ENCODE measurements at regions of chr3 and their contacts with region 1.

Region 1: GRCh38 chr3:51501833-51502561 is 2.2 kb upstream of the DCAF1 start:
- DNase-seq: peak; percentile 66
- CTCF ChIP-seq: peak; percentile 99

Region 2: DNA sequence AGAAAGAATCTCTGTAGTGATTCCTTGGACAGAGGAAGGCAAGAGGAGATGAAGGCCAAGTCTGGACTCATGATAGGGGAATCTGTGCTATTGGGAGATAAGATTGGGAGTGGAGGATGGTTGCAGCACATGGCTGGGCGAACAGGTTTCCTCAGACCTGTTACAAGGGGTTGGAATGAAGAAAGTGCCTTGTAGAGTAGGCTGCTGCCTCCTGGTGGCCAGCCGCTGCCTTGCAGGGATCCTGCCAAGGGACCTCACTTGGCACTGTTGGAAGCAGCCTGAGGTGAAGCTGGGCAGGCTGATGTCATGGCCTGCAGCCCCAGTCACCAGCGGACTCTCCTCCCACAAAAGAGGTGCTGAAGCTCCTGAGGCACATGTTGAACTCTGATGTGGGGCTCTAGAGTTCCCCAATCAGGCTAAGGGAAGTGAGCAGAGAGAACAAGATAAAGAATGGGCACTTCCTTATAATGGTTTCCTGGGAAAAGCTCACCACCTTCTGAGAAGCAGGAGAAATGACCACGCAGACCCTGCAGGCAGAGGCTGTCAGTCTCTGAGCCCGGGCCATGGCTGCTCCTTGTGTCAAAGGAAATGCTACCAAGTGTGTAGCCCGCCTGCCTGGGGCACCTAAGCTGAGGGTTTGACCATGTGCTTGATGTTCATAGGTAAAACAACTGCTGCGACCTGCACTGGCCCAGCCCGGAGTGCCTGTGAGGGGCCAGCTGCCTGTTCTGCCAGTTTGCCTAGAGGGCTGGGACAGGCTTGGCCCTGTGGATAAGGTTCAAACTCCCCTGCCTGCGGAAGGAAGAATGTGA is 167.4 kb after region 1 on chr3:
- in situ Hi-C with region 1: loop called (anchors 10 kb)
- DNase-seq: peak; percentile 73
- CTCF ChIP-seq: peak; percentile 99

Region 3: DNA sequence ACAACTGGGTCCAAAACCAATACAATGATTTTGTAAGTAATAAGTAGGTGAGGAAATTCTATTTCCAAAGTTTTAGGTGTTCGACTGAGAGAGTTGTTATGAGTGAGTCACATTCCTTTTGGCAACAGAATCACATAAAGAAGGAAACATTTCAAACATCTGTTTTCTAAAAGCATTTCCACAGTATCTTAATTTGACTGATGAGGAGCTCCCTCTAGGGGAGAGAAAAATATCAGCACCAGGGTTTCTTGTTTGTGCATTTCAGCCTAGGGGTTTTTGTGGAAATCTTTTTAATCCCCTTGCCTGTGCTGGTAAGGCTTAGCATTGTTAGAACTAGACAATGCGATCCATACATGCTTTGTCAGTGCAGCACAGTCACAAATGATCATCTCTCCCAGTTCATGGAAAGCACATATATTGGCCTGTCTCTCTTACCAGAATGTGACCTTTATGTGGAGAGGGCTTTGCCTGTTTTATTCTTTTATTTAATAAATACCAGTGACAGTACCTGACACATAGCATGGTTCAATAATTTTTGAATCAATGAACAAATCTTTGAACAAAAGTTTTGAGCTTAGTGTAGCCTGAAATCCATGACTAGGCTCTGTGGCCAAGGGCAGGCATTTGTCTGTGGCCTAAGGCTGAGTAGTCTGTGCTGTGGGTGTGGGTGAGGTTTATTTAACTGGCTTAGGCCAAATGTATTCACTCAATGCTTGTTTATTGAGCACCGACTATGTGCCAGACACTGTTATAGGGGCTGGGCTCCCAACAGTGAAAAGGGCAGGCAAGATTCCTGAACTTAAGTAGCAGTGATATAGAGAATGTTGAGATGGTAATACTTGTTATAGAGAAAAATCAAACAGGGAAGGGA is 298.1 kb after region 1 on chr3:
- in situ Hi-C with region 1: loop called (anchors 10 kb)
- DNase-seq: peak; percentile 49
- CTCF ChIP-seq: peak; percentile 76

Measured in GM13977 (cell line).